GM23248 (cell line): ENCODE measurements at regions of chr7 and their contacts with region 1.

Region 1: DNA sequence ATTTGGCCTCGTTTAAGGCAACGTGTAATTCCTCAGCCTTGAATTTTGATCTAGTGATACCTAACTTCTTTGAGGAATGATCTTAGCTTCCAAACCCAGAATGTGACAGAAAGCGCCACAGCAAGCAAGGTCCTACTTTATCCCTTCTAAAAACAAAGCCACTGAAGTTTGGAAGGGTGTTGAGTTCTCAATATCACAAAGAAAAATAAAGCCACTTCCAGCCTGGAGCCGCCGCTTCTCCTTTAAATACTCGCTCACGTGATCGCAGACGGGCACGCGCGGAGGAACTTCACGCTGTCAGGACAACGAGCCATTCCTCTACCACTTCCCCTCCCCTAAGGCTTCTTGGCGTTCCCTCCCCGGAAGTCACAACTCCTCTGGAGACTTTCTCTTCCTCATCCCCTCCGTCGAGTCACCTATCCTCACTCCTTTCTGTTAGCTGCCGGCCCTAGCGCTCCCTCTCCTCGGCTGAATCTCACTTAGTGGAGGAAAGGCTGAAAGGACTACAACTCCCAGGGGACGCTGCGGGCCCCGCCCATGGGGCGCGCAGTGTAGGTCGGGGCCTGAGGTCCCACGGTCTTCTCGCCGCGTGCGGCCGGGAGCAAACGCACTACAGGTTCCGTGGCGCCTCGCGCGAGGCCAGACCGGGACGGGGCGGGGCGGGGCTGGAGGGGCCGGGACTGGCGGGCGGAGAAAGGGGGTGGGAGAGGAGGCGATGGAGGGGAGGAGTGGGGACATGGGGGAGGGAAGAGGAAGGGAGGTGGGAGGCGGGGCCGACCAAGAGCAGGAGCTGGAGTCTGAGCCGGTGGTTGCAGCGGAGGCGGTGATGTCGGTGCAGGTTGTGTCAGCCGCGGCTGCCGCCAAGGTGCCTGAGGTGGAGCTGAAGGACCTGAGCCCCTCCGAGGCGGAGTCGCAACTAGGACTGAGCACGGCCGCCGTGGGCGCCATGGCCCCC is at the start of gene AHCYL2:
- DNase-seq: peak; percentile 99
- H3K4me3 ChIP-seq: peak within 1 kb of the TSS; percentile 77
- H3K27ac ChIP-seq: peak within 1 kb of the TSS; percentile 89
- H3K4me1 ChIP-seq: peaks cover 5% of the 10 kb centered on the region; the same call in 1 of the 2 replicates
- H3K27me3 ChIP-seq: no peaks in the 10 kb centered on the region
- total RNA-seq, gene AHCYL2: 8.9 and 9.5 TPM in 2 replicates

Region 2: GRCh38 chr7:129494041-129494440 is 269.5 kb after region 1 on chr7:
- in situ Hi-C with region 1: loop called (anchors 10 kb)
- DNase-seq: peak; percentile 93
- H3K4me3 ChIP-seq: no peak overlapping the region
- H3K27ac ChIP-seq: peak overlapping the region; percentile 66
- H3K4me1 ChIP-seq: peaks cover 29% of the 10 kb centered on the region
- H3K27me3 ChIP-seq: no peaks in the 10 kb centered on the region

Region 3: GRCh38 chr7:129635300-129636029 is 410.9 kb after region 1 on chr7:
- in situ Hi-C with region 1: loop called (anchors 25 kb)
- DNase-seq: peak; percentile 81
- H3K4me3 ChIP-seq: no peak overlapping the region
- H3K27ac ChIP-seq: no peak overlapping the region
- H3K4me1 ChIP-seq: 0 out of 2 replicates have a peak, but pooled peaks cover 4% of the 10 kb centered on the region
- H3K27me3 ChIP-seq: no peaks in the 10 kb centered on the region

Region 4: GRCh38 chr7:130010689-130011412 is 786.3 kb after region 1 on chr7:
- in situ Hi-C with region 1: no loop called
- DNase-seq: peak; percentile 72
- H3K4me3 ChIP-seq: no peak overlapping the region
- H3K27ac ChIP-seq: peak overlapping the region; percentile 93
- H3K4me1 ChIP-seq: peaks cover 12% of the 10 kb centered on the region
- H3K27me3 ChIP-seq: no peaks in the 10 kb centered on the region